ENCODE measurements at regions of chr4 and their contacts with region 1.

Region 1: DNA sequence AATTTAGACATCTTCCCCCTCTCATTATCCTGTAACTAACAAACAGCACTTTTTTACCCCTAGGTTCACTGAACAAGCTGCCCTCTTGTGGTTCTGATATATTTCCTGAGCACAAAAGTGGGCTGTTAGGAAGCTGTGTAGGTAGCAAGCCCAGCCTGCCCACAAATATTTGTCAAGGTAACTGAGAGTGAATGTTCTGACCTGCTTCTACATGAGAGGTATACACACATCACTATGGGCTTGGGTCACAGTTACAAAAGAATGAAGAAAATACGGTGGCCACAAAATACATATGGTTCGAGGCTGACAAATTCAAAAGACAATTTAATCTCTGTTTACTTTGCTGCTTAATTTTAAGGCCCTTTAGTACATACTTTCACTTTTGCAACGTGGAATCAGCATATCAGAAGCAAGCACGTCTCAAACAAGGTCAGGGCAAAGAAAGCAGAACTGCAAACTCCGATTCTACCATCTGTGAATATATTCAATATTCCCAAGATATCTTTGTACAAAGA is 78.7 kb downstream of the RBM47 start:
- DNase-seq: no peak
- ATAC-seq: peak; percentile 78
- H3K4me3 Mint-ChIP-seq: peak overlapping the region; percentile 81
- H3K27ac Mint-ChIP-seq: peak overlapping the region; percentile 83
- H3K4me1 Mint-ChIP-seq: peaks cover 42% of the 10 kb centered on the region
- H3K27me3 Mint-ChIP-seq: no peaks in the 10 kb centered on the region
- CTCF ChIP-seq: no peak

Region 2: DNA sequence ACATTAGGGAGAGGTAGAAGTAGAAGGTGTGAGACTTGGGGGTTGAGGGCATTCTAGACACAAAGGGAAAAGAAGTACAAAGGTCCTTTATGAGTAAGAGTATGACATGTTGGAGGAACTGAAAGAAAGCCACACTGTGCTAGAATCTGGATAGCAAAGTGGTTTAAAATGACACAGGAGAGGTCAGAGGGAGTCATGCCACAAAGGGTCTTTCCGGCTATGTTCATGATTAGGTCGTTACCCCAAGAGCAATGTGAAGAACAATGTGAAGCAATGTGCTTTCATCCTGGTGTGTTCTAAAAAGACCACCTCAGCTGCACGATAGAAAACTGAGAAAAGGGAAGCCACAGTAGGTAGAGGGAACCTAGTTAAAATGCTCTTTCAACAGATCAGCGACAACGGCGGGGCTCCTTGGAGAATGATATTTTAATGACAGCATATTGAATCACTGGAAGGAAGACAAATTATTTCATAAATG is 941.5 kb before region 1 on chr4:
- CTCF ChIA-PET with region 1: no interaction called
- POLR2A ChIA-PET with region 1: no interaction called
- intact Hi-C with region 1: no loop called
- DNase-seq: no peak
- ATAC-seq: peak; percentile 84
- H3K4me3 Mint-ChIP-seq: peak overlapping the region; percentile 75
- H3K27ac Mint-ChIP-seq: peak overlapping the region; percentile 88
- H3K4me1 Mint-ChIP-seq: peaks cover 67% of the 10 kb centered on the region
- H3K27me3 Mint-ChIP-seq: no peaks in the 10 kb centered on the region
- CTCF ChIP-seq: no peak

Region 3: DNA sequence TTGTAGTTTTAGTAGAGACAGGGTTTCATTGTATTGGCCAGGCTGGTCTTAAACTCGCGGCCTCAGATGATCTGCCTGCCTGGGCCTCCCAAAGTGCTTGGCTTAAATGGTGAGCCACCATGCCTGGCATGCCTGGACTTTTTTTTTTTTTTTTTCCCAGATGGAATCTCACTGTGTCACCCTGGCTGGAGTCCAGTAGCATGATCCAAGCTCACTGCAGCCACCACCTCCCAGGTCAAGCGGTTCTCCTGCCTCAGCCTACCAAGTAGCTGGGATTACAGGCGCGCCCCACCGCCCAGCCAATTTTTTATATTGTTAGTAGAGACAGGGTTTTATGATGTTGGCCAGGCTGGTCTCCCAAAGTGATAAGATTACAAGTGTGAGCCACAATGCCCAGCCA is 844.7 kb before region 1 on chr4:
- CTCF ChIA-PET with region 1: no interaction called
- POLR2A ChIA-PET with region 1: no interaction called
- intact Hi-C with region 1: no loop called
- DNase-seq: no peak
- ATAC-seq: no peak
- H3K4me3 Mint-ChIP-seq: no peak overlapping the region
- H3K27ac Mint-ChIP-seq: no peak overlapping the region
- H3K4me1 Mint-ChIP-seq: peaks cover 39% of the 10 kb centered on the region
- H3K27me3 Mint-ChIP-seq: no peaks in the 10 kb centered on the region
- CTCF ChIP-seq: no peak

Region 4: GRCh38 chr4:40157436-40157835 is 393.6 kb before region 1 on chr4:
- CTCF ChIA-PET with region 1: no interaction called
- POLR2A ChIA-PET with region 1: interaction called, 10 read pairs
- intact Hi-C with region 1: no loop called
- DNase-seq: no peak
- ATAC-seq: no peak
- H3K4me3 Mint-ChIP-seq: no peak overlapping the region
- H3K27ac Mint-ChIP-seq: no peak overlapping the region
- H3K4me1 Mint-ChIP-seq: peaks cover 13% of the 10 kb centered on the region
- H3K27me3 Mint-ChIP-seq: no peaks in the 10 kb centered on the region
- CTCF ChIP-seq: no peak

Region 5: DNA sequence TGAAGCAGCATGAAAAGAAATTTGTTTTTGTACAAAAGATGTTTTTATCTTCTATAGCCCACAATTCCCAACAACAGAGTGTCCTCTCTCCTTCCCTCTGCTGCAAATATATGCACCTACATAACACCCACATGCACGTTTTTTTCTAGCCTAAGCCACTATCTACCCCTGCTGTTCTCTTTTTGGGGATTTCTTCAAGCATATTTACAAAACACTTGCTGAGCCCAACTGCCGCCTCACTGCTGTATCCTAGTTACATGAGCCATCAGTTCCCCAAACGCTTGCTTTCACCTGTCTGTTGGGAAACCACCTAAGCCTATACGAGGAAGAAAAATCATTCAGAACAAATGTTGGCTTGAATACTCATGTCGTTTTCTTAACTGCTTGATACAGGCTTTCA is 88.7 kb before region 1 on chr4:
- CTCF ChIA-PET with region 1: no interaction called
- POLR2A ChIA-PET with region 1: interaction called, 3 read pairs
- intact Hi-C with region 1: loop called (anchors 5 kb)
- DNase-seq: no peak
- ATAC-seq: peak; percentile 95
- H3K4me3 Mint-ChIP-seq: no peak overlapping the region
- H3K27ac Mint-ChIP-seq: peak overlapping the region; percentile 72
- H3K4me1 Mint-ChIP-seq: peaks cover 17% of the 10 kb centered on the region
- H3K27me3 Mint-ChIP-seq: no peaks in the 10 kb centered on the region
- CTCF ChIP-seq: no peak

Region 6: GRCh38 chr4:40536032-40536431 is 15.0 kb before region 1 on chr4:
- CTCF ChIA-PET with region 1: interaction called, 3 read pairs
- POLR2A ChIA-PET with region 1: no interaction called
- intact Hi-C with region 1: loop called (anchors 1 kb)
- DNase-seq: no peak
- ATAC-seq: peak; percentile 74
- H3K4me3 Mint-ChIP-seq: peak overlapping the region; percentile 46
- H3K27ac Mint-ChIP-seq: peak overlapping the region; percentile 76
- H3K4me1 Mint-ChIP-seq: peaks cover 17% of the 10 kb centered on the region
- H3K27me3 Mint-ChIP-seq: no peaks in the 10 kb centered on the region
- CTCF ChIP-seq: no peak

Region 7: GRCh38 chr4:40719008-40719623 is 168.1 kb after region 1 on chr4:
- CTCF ChIA-PET with region 1: interaction called, 3 read pairs
- POLR2A ChIA-PET with region 1: no interaction called
- intact Hi-C with region 1: loop called (anchors 5 kb)
- DNase-seq: no peak
- ATAC-seq: no peak
- H3K4me3 Mint-ChIP-seq: no peak overlapping the region
- H3K27ac Mint-ChIP-seq: no peak overlapping the region
- H3K4me1 Mint-ChIP-seq: peaks cover 3% of the 10 kb centered on the region
- H3K27me3 Mint-ChIP-seq: no peaks in the 10 kb centered on the region
- CTCF ChIP-seq: no peak

Measured in activated B cell treated with CpG ODN at 0.5 μM for 24 hours (primary cell).